ENCODE measurements at regions of chr3 and their contacts with region 1.

Region 1: DNA sequence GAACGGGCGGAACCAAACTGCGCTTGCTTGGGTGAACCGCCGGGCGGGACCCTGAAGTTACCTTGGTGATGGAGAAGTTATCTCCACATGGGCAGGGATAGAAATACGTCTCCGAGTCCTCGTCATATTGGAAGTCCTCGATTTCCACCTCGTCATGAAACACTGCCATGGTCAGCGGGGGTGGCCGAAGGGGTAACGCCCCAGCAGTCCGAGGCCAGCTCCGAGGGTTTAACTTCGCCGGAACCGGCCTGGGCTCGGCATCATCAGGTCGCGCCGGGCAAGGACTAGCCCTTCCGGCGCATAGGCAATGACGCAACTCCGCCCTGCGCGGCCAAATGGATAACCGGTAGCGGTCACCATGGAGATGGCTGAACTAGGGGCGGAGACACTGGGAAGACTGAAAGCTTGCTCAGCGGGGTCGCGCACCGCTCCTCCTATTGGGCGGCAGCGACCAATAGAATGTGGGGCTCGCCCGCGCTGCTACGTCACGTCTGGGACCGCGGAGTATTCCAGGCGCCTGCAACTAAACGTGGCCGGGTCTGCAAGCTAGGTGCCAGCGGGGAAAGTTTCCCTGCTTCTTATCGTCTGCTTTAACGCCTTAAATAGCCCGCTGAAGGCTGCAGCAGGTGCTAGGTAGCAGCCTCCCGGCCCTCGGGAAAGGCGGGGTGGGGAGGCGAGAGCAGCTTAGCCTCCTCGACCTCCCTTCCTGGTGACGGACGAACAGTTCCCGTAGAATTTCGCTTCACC is at the starts of genes DPH3 and OXNAD1:
- DNase-seq: peak; percentile 99
- H3K4me3 Mint-ChIP-seq: peak within 1 kb of the TSS; percentile 97
- H3K27ac Mint-ChIP-seq: peak within 1 kb of the TSS; percentile 100
- H3K4me1 Mint-ChIP-seq: peaks cover 35% of the 10 kb centered on the region
- H3K27me3 Mint-ChIP-seq: no peaks in the 10 kb centered on the region
- total RNA-seq, gene DPH3: 28.1 and 36.6 TPM in 2 replicates
- total RNA-seq, gene OXNAD1: 29.5 and 31.1 TPM in 2 replicates

Region 2: DNA sequence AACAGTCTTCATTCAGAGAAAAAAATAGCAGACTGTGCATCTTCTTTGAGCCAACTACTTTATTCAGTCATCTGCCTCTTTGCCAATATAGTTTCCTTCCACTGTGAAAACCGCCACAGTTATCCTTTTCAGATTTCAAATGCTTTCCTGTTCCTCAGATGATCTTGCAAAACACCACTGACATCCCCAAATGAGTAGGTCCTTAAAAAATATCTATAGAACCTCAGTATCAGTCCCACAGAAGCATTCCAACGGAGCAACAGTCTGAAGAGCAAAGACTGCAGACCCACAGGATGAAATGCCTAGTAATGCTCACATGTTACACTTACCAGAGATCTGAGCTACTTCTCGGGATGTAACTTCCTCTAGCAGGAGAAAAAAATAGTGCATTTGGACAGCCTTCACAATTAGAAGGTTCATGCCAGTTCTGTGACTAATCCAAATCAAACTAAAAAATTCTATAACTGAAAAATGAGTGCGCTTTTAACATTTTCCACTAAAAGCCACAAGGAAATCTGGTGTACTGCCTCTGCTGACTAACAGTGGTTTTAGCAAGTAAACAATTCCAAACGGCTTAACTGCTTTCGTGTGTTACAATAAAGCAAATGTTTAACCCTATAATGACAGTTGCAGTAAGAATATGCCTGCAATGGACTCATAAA is 467.1 kb before region 1 on chr3 and contains the start of gene ANKRD28:
- intact Hi-C with region 1: loop called (anchors 10 kb)
- DNase-seq: peak; percentile 27
- H3K4me3 Mint-ChIP-seq: peak within 1 kb of the TSS; percentile 88
- H3K27ac Mint-ChIP-seq: peak within 1 kb of the TSS; percentile 99
- H3K4me1 Mint-ChIP-seq: peaks cover 92% of the 10 kb centered on the region
- H3K27me3 Mint-ChIP-seq: no peaks in the 10 kb centered on the region
- total RNA-seq, gene ANKRD28: 39.6 and 42.9 TPM in 2 replicates

Region 3: GRCh38 chr3:16290007-16290826 is 25.3 kb after region 1 on chr3:
- intact Hi-C with region 1: loop called (anchors 1 kb)
- DNase-seq: no peak
- H3K4me3 Mint-ChIP-seq: peak overlapping the region; percentile 91
- H3K27ac Mint-ChIP-seq: peak overlapping the region; percentile 80
- H3K4me1 Mint-ChIP-seq: peaks cover 80% of the 10 kb centered on the region
- H3K27me3 Mint-ChIP-seq: no peaks in the 10 kb centered on the region

Region 4: GRCh38 chr3:16378920-16379319 is 114.0 kb after region 1 on chr3:
- intact Hi-C with region 1: loop called (anchors 5 kb)
- DNase-seq: peak; percentile 28
- H3K4me3 Mint-ChIP-seq: peak overlapping the region; percentile 31
- H3K27ac Mint-ChIP-seq: peak overlapping the region; percentile 94
- H3K4me1 Mint-ChIP-seq: peaks cover 95% of the 10 kb centered on the region
- H3K27me3 Mint-ChIP-seq: no peaks in the 10 kb centered on the region

Region 5: GRCh38 chr3:16448639-16449070 is 183.8 kb after region 1 on chr3:
- intact Hi-C with region 1: no loop called
- DNase-seq: no peak
- H3K4me3 Mint-ChIP-seq: no peak overlapping the region
- H3K27ac Mint-ChIP-seq: peak overlapping the region; percentile 79
- H3K4me1 Mint-ChIP-seq: peaks cover 56% of the 10 kb centered on the region
- H3K27me3 Mint-ChIP-seq: no peaks in the 10 kb centered on the region

Region 6: DNA sequence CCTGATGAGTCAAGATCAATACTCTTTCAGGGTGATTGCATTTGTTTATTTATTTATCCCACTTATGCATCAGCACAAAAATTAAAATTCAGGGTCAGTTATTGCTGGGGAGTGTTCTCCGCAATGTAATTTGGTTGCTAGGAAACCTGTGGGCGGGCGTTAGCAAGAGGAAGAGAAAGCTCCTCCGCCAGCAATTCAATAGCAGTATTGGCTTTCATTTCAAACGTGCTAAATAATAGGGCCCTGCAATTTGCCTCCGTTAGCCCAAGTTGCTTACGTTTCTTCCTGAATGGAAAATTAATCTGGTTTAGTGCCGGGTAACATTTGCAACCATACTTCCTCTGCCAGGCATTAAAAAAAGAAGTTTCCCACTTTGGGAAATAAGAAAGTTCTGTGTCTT is 584.3 kb after region 1 on chr3:
- intact Hi-C with region 1: loop called (anchors 10 kb)
- DNase-seq: peak; percentile 57
- H3K4me3 Mint-ChIP-seq: peak overlapping the region; percentile 48
- H3K27ac Mint-ChIP-seq: peak overlapping the region; percentile 56
- H3K4me1 Mint-ChIP-seq: peaks cover 32% of the 10 kb centered on the region
- H3K27me3 Mint-ChIP-seq: peaks cover 5% of the 10 kb centered on the region

Region 7: DNA sequence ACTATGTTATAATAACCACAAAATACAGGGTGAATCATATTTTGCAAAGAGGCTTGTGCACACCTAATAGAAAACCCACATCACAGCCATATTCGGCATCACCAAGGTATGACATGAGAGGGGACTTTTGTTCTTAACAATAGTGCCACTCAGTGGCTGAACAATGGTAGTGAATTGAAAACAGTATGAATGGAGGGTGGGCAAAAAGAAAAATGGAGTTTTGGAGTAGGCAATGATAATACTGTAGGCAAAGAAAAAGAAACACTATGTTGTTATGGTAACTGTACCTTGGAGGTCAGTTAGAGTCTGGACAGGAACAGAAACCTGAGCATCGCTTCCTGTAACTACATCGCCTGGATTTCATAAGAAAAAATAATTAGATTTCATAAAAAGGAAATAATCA is 968.5 kb after region 1 on chr3:
- intact Hi-C with region 1: loop called (anchors 2 kb)
- DNase-seq: peak; percentile 27
- H3K4me3 Mint-ChIP-seq: no peak overlapping the region
- H3K27ac Mint-ChIP-seq: no peak overlapping the region
- H3K4me1 Mint-ChIP-seq: peaks cover 13% of the 10 kb centered on the region
- H3K27me3 Mint-ChIP-seq: no peaks in the 10 kb centered on the region

Measured in activated T-helper 1 cell treated with anti-CD3 and anti-CD28 coated beads, Interleukin-12 subunit alpha, Interleukin-12 subunit beta, Interleukin-2, Interleukin-4 antibody, amounts not matched to agents 30 ng/mL and 10 ng/mL and 1 ng/mL, durations not matched to agents 14 hours and 24 hours and 36 hours (primary cell).